K562 (cell line): ENCODE measurements at regions of chr22 and their contacts with region 1.

Region 1: GRCh38 chr22:20885557-20886323 is 26.9 kb downstream of the SNAP29 start:
- DNase-seq: peak; percentile 97 to 98 (median 98)
- ATAC-seq: peak; percentile 99
- H3K4me3 ChIP-seq: no peak overlapping the region
- H3K27ac ChIP-seq: peak overlapping the region; percentile 38
- H3K4me1 ChIP-seq: peaks cover 12 to 14% of the 10 kb centered on the region in 2 experiments
- H3K27me3 ChIP-seq: no peaks in the 10 kb centered on the region
- CTCF ChIP-seq: peak; percentile 99 to 100 (median 99)
- EP300 ChIP-seq: peak; percentile 10; the same call in 1 of the 2 replicates
- POLR2A ChIP-seq: no peak; the same call in 1 of the 2 replicates
- RAD21 ChIP-seq: peak; percentile 100

Region 2: DNA sequence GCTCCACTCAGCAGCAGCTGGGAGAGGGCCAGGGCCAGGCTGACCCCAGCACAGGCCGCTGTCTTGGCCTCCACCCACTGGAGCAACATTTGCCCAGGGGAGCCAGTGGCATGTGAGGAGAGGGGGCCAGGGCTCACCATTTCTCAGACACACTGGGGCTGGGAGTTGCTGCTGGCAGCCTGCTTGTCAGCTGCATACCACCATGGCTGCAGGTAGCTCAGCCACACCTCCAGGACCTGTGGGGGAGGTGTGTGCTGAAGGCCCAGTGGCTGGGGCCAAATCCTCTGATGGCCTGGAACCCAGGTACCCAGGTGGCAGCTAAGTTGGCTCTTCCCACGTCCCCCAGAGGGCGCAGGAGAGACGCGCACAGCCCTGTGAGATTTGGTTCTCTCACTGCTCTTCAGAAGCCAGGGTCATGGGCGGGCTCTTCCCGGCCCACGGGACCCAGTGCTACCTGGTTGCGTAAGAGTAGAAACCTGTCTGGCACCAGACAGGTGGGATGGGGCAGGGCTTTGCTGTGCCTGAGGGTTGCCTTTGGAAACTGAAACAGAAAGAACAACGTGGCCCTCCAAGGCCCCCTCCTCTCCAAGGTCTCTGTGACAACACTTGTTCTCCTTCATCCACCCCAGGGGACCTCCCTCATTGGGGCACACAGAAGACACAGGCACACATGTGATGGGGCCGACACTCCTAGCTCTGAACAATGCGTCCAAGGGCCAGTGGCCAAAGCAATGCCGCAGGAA is 279.5 kb before region 1 on chr22:
- CTCF ChIA-PET with region 1: no interaction called
- POLR2A ChIA-PET with region 1: no interaction called
- in situ Hi-C with region 1: no loop called
- intact Hi-C with region 1: no loop called
- DNase-seq: peak; percentile 92 to 97 (median 95)
- ATAC-seq: peak; percentile 83
- H3K4me3 ChIP-seq: no peak overlapping the region
- H3K27ac ChIP-seq: no peak overlapping the region
- H3K4me1 ChIP-seq: peaks cover 0 to 45% of the 10 kb centered on the region in 2 experiments; a peak in 2 of 5 replicates
- H3K27me3 ChIP-seq: peaks cover 58 to 99% of the 10 kb centered on the region in 2 experiments; a peak in 4 of 5 replicates
- CTCF ChIP-seq: peak; percentile 98 to 100 (median 99)
- EP300 ChIP-seq: peak; percentile 51
- POLR2A ChIP-seq: no peak
- RAD21 ChIP-seq: peak; percentile 96 to 100; a peak in 3 of 4 replicates

Region 3: DNA sequence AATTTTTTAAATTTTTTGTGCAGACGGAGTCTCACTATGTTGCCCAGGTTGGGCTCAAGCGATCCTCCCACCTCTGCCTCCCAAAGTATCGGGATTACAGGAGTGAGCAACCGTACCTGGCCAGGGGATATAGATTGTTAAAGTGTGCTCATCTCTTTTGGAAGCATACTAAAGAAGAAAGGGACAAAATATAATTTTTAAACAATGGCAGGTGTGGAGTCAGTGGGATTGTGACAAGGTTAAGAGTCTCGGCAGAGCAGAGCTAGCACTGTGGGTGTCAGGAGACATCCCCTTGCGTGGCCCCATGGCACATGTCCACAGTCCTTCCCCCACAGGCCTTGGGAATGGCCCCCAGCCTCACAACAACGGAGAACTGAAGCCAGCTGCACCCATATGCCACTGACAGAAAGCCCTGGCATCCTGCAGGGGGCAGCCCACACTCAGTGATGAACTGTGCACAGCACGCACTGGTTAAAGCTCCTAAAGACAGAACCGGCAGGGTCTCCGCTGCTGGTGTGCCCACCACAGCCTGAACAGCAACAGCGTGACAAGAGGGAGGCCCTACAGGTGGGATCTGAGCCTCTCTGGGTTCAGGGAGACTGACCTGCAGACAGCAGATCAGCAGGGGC is 81.9 kb before region 1 on chr22:
- CTCF ChIA-PET with region 1: interaction called, 27 read pairs
- POLR2A ChIA-PET with region 1: interaction called, 4 read pairs
- in situ Hi-C with region 1: no loop called
- intact Hi-C with region 1: loop called (anchors 1 kb)
- DNase-seq: peak; percentile 78 to 84 (median 84)
- ATAC-seq: peak; percentile 89
- H3K4me3 ChIP-seq: no peak overlapping the region
- H3K27ac ChIP-seq: no peak overlapping the region
- H3K4me1 ChIP-seq: peaks cover 3 to 13% of the 10 kb centered on the region in 2 experiments; a peak in 3 of 5 replicates
- H3K27me3 ChIP-seq: no peaks in the 10 kb centered on the region
- CTCF ChIP-seq: peak; percentile 94 to 100 (median 98)
- EP300 ChIP-seq: no peak
- POLR2A ChIP-seq: no peak
- RAD21 ChIP-seq: peak; percentile 95 to 99

Region 4: GRCh38 chr22:20873214-20873613 is 12.5 kb before region 1 on chr22:
- CTCF ChIA-PET with region 1: no interaction called
- POLR2A ChIA-PET with region 1: interaction called, 172 read pairs
- in situ Hi-C with region 1: no loop called
- intact Hi-C with region 1: no loop called
- DNase-seq: peak in 2 of 4 experiments; percentile 35 to 45
- ATAC-seq: peak; percentile 50
- H3K4me3 ChIP-seq: no peak overlapping the region
- H3K27ac ChIP-seq: no peak overlapping the region
- H3K4me1 ChIP-seq: peaks cover 10 to 20% of the 10 kb centered on the region in 2 experiments
- H3K27me3 ChIP-seq: no peaks in the 10 kb centered on the region
- CTCF ChIP-seq: no peak
- EP300 ChIP-seq: no peak
- POLR2A ChIP-seq: no peak
- RAD21 ChIP-seq: no peak

Region 5: GRCh38 chr22:20926243-20926642 is 40.5 kb after region 1 on chr22:
- CTCF ChIA-PET with region 1: no interaction called
- POLR2A ChIA-PET with region 1: interaction called, 1,556 read pairs
- in situ Hi-C with region 1: no loop called
- intact Hi-C with region 1: no loop called
- DNase-seq: peak in 1 of 4 experiments; percentile 38
- ATAC-seq: no peak
- H3K4me3 ChIP-seq: no peak overlapping the region
- H3K27ac ChIP-seq: peak overlapping the region; percentile 2; the same call in 1 of the 3 replicates
- H3K4me1 ChIP-seq: peaks cover 36 to 38% of the 10 kb centered on the region in 2 experiments
- H3K27me3 ChIP-seq: no peaks in the 10 kb centered on the region
- CTCF ChIP-seq: no peak
- EP300 ChIP-seq: no peak
- POLR2A ChIP-seq: no peak
- RAD21 ChIP-seq: no peak

Region 6: GRCh38 chr22:20981787-20982562 is 96.2 kb after region 1 on chr22 and contains the start of gene LZTR1:
- CTCF ChIA-PET with region 1: interaction called, 3 read pairs
- POLR2A ChIA-PET with region 1: interaction called, 1,556 read pairs
- in situ Hi-C with region 1: no loop called
- intact Hi-C with region 1: loop called (anchors 1 kb)
- DNase-seq: peak; percentile 99 to 100 (median 100)
- ATAC-seq: peak; percentile 96
- H3K4me3 ChIP-seq: peak within 1 kb of the TSS; percentile 54
- H3K27ac ChIP-seq: peak within 1 kb of the TSS; percentile 86
- H3K4me1 ChIP-seq: peaks cover 19 to 48% of the 10 kb centered on the region in 2 experiments
- H3K27me3 ChIP-seq: peaks cover 3 to 9% of the 10 kb centered on the region in 2 experiments; a peak in 3 of 5 replicates
- CTCF ChIP-seq: peak; percentile 99 to 100 (median 99)
- EP300 ChIP-seq: no peak
- POLR2A ChIP-seq: no peak
- RAD21 ChIP-seq: peak; percentile 97
- polyA plus RNA-seq, gene LZTR1: 2.2 to 3.1 TPM